ENCODE measurements at regions of chr7 and their contacts with region 1.

Region 1: GRCh38 chr7:140062528-140063299 is at the start of gene PARP12:
- DNase-seq: peak; percentile 71 to 94 (median 86)
- ATAC-seq: peak; percentile 67
- H3K4me3 ChIP-seq: peak within 1 kb of the TSS; percentile 71
- H3K4me3 Mint-ChIP-seq: peak within 1 kb of the TSS; percentile 85
- H3K27ac ChIP-seq: peak within 1 kb of the TSS; percentile 67 to 82
- H3K27ac Mint-ChIP-seq: peak within 1 kb of the TSS; percentile 83
- H3K4me1 ChIP-seq: peaks cover 49% of the 10 kb centered on the region
- H3K4me1 Mint-ChIP-seq: peaks cover 55% of the 10 kb centered on the region
- H3K27me3 ChIP-seq: no peaks in the 10 kb centered on the region
- H3K27me3 Mint-ChIP-seq: no peaks in the 10 kb centered on the region
- CTCF ChIP-seq: no peak
- total RNA-seq, gene PARP12: 76.7 to 78.5 TPM

Region 2: DNA sequence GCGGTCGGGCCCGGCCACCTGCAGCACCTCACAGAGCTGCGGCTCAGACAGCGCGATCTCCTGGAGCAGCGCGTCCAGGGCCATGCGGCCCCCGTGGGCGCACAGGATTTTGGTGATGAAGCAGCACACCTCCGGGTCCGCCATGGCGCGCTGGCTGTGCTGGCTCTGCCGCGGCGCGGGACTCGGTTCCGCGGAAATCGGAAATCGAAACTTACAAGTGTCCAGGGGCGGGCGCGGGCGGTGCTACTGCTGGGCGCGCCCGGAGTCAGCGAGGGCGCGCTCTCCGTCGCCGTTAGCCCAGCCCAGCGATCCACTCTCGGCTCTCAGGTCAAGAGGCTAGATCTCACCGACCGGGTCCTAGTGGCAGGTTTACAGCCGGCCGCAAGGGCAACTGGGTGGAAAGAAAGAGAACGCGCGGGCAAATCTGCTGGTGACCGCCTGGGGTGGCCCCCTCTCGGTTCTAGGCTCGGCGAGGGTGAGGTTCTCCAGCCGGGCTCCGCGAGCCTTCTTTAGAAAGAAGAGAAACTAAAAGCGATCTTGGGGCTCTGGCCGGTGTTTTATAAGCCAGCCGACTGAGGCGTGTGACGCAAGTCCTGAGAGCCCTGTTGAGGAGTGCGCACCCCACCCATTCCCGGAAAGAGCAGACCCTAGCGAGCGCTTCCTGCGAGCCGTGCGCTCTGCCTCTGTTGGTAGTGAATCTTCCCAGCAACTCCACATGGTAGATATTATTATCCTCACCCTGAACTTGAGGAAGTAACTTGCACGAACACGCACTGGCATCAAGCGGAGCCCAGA is 953.3 kb before region 1 on chr7 and contains the start of gene ZC3HAV1:
- CTCF ChIA-PET with region 1: no interaction called
- POLR2A ChIA-PET with region 1: no interaction called
- intact Hi-C with region 1: loop called in 1 of 2 experiments (anchors 5 kb)
- DNase-seq: peak; percentile 80 to 97 (median 88)
- ATAC-seq: peak; percentile 86
- H3K4me3 ChIP-seq: peak within 1 kb of the TSS; percentile 97
- H3K4me3 Mint-ChIP-seq: peak within 1 kb of the TSS; percentile 99
- H3K27ac ChIP-seq: peak within 1 kb of the TSS; percentile 97 to 98
- H3K27ac Mint-ChIP-seq: peak within 1 kb of the TSS; percentile 95
- H3K4me1 ChIP-seq: peaks cover 35% of the 10 kb centered on the region
- H3K4me1 Mint-ChIP-seq: peaks cover 52% of the 10 kb centered on the region
- H3K27me3 ChIP-seq: no peaks in the 10 kb centered on the region
- H3K27me3 Mint-ChIP-seq: no peaks in the 10 kb centered on the region
- CTCF ChIP-seq: no peak
- total RNA-seq, gene ZC3HAV1: 169 to 178 TPM

Region 3: GRCh38 chr7:140036224-140036962 is 26.3 kb before region 1 on chr7:
- CTCF ChIA-PET with region 1: no interaction called
- POLR2A ChIA-PET with region 1: no interaction called
- intact Hi-C with region 1: no loop called
- DNase-seq: peak in 3 of 14 experiments; percentile 16 to 28 (median 19)
- ATAC-seq: peak; percentile 34
- H3K4me3 ChIP-seq: no peak overlapping the region
- H3K4me3 Mint-ChIP-seq: no peak overlapping the region
- H3K27ac ChIP-seq: no peak overlapping the region
- H3K27ac Mint-ChIP-seq: no peak overlapping the region
- H3K4me1 ChIP-seq: peaks cover 22% of the 10 kb centered on the region
- H3K4me1 Mint-ChIP-seq: peaks cover 48% of the 10 kb centered on the region
- H3K27me3 ChIP-seq: no peaks in the 10 kb centered on the region
- H3K27me3 Mint-ChIP-seq: no peaks in the 10 kb centered on the region
- CTCF ChIP-seq: no peak

Region 4: GRCh38 chr7:140304191-140304799 is 241.6 kb after region 1 on chr7:
- CTCF ChIA-PET with region 1: no interaction called
- POLR2A ChIA-PET with region 1: no interaction called
- intact Hi-C with region 1: loop called in 1 of 2 experiments (anchors 5 kb)
- DNase-seq: peak in 13 of 14 experiments; percentile 7 to 79 (median 34)
- ATAC-seq: peak; percentile 95
- H3K4me3 ChIP-seq: no peak overlapping the region
- H3K4me3 Mint-ChIP-seq: no peak overlapping the region
- H3K27ac ChIP-seq: no peak overlapping the region
- H3K27ac Mint-ChIP-seq: peak overlapping the region; percentile 21
- H3K4me1 ChIP-seq: peaks cover 4% of the 10 kb centered on the region
- H3K4me1 Mint-ChIP-seq: peaks cover 6% of the 10 kb centered on the region
- H3K27me3 ChIP-seq: no peaks in the 10 kb centered on the region
- H3K27me3 Mint-ChIP-seq: no peaks in the 10 kb centered on the region
- CTCF ChIP-seq: peak; percentile 66

Region 5: DNA sequence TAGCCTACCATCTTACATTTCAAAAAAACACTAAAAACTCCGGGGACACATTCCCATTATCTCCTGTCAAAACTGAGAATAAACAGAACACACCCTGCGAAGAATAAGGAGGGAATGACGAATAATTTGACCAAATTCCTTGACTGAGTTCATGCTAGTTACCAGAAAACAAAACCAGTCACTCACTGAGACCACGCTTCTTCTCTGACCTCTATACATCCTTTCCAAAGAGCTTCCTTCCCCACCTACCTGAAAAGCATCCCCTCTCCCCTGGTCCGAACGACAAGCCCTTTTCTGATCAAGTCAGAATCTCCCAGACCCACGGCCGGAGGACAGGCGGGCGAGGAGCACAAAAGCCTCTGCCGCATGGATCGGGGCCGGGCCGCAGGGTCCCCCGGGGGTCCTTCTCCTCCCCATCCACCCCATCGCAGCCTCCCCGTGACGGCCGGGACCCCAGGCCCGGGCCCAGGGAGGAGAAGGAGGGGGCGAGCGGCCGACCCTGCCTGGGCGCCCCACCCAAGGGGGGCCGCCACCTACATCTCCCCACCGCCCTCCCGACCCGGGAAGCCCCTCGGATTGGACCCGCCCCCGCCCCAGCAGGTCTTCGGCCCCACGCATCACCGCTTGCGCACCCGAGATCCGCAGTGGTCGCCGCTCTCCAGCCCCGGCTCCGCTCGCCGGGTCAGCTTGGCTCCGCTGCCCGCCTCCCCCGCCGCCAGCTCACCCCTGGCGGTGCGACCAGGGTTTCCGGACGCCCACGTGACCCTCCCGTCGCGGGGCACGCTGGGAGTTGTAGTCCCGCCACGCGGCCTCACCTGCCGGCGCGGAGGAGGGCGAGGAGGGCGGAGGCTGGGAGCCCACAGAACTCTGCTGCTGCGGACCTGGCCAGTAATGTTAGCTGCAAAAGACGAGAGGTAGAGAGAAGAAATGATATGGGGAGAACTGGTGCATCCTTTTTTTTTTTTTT is 335.4 kb after region 1 on chr7 and contains the start of gene SLC37A3:
- CTCF ChIA-PET with region 1: no interaction called
- POLR2A ChIA-PET with region 1: no interaction called
- intact Hi-C with region 1: loop called in 1 of 2 experiments (anchors 5 kb)
- DNase-seq: peak; percentile 75 to 91 (median 84)
- ATAC-seq: peak; percentile 98
- H3K4me3 ChIP-seq: peak within 1 kb of the TSS; percentile 79
- H3K4me3 Mint-ChIP-seq: peak within 1 kb of the TSS; percentile 86
- H3K27ac ChIP-seq: peak within 1 kb of the TSS in 1 of 2 donors; percentile 53
- H3K27ac Mint-ChIP-seq: peak within 1 kb of the TSS; percentile 64
- H3K4me1 ChIP-seq: peaks cover 22% of the 10 kb centered on the region
- H3K4me1 Mint-ChIP-seq: peaks cover 33% of the 10 kb centered on the region
- H3K27me3 ChIP-seq: no peaks in the 10 kb centered on the region
- H3K27me3 Mint-ChIP-seq: no peaks in the 10 kb centered on the region
- CTCF ChIP-seq: no peak
- total RNA-seq, gene SLC37A3: 23.5 to 25.6 TPM

Region 6: GRCh38 chr7:141551094-141551781 is 1488.5 kb after region 1 on chr7 and contains the start of gene AGK:
- CTCF ChIA-PET with region 1: no interaction called
- POLR2A ChIA-PET with region 1: no interaction called
- intact Hi-C with region 1: loop called in 1 of 2 experiments (anchors 5 kb)
- DNase-seq: peak; percentile 56 to 84 (median 72)
- ATAC-seq: peak; percentile 97
- H3K4me3 ChIP-seq: peak within 1 kb of the TSS; percentile 62
- H3K4me3 Mint-ChIP-seq: peak within 1 kb of the TSS; percentile 96
- H3K27ac ChIP-seq: no peak within 1 kb of the TSS
- H3K27ac Mint-ChIP-seq: peak within 1 kb of the TSS; percentile 72
- H3K4me1 ChIP-seq: peaks cover 17% of the 10 kb centered on the region
- H3K4me1 Mint-ChIP-seq: peaks cover 33% of the 10 kb centered on the region
- H3K27me3 ChIP-seq: no peaks in the 10 kb centered on the region
- H3K27me3 Mint-ChIP-seq: no peaks in the 10 kb centered on the region
- CTCF ChIP-seq: no peak
- total RNA-seq, gene AGK: 18.9 to 20.5 TPM

Measured in CD4-positive, alpha-beta T cell (primary cell).